ENCODE measurements at regions of chrX and their contacts with region 1.

Region 1: GRCh38 chrX:109393859-109394258 is 88.0 kb downstream of the GUCY2F start:
- DNase-seq: no peak
- ATAC-seq: no peak
- H3K4me3 ChIP-seq: no peak overlapping the region
- H3K27ac ChIP-seq: no peak overlapping the region
- H3K4me1 ChIP-seq: no peaks in the 10 kb centered on the region
- H3K27me3 ChIP-seq: no peaks in the 10 kb centered on the region

Region 2: DNA sequence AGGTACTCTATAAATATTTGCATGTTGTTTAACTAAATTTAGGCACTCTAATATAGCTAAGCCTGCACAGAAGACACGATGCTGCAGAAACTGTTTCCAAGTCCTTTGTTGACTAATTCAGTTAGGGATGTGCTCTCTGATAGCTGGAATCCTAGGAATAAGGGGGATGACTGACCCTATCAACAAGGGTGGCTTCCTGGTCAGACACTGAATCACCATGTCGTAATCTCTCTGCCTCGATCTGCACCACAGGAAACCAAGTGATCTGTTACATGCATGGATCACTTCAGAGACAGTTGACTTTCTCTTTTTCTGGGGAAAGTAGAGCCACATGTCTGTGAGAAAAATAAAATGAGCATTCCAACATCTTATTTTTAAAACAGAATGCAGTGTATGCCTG is 81.1 kb before region 1 on chrX:
- intact Hi-C with region 1: no loop called
- DNase-seq: no peak
- ATAC-seq: no peak
- H3K4me3 ChIP-seq: no peak overlapping the region
- H3K27ac ChIP-seq: no peak overlapping the region
- H3K4me1 ChIP-seq: no peaks in the 10 kb centered on the region
- H3K27me3 ChIP-seq: no peaks in the 10 kb centered on the region

Region 3: DNA sequence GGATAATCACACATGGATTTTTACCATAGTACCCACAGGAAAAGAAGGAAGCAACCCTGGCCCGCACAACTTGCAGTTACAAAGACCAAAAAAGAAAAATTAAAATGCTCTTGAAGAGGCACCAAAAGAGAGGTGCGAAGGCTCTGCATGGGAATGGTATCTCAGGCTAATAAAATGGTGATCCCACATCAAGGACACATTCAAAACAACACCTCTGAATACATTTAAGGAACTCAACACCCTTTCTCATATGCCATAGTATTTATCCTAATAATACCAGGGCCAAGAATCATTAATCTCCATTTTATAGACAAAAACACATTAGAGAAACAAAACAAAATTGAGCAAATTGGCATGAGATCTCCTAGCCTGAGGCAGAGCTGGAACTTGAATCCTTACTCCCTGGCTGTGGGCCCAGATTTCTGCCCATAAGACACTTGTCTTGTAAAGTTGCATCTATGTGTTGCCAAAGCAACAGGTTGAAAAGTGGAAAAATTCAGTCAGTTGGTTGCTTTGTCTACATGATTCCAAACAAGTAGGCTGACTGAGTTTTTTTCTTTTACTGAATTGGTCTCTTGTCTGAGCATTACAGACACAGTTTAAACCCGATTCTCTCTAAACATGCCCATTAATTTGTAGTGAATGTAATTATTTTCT is 54.6 kb after region 1 on chrX:
- intact Hi-C with region 1: loop called in 1 of 2 experiments (anchors 10 kb)
- DNase-seq: no peak
- ATAC-seq: no peak
- H3K4me3 ChIP-seq: no peak overlapping the region
- H3K27ac ChIP-seq: no peak overlapping the region
- H3K4me1 ChIP-seq: no peaks in the 10 kb centered on the region
- H3K27me3 ChIP-seq: no peaks in the 10 kb centered on the region

Region 4: GRCh38 chrX:109501176-109501575 is 107.3 kb after region 1 on chrX:
- intact Hi-C with region 1: no loop called
- DNase-seq: no peak
- ATAC-seq: no peak
- H3K4me3 ChIP-seq: no peak overlapping the region
- H3K27ac ChIP-seq: no peak overlapping the region
- H3K4me1 ChIP-seq: no peaks in the 10 kb centered on the region
- H3K27me3 ChIP-seq: no peaks in the 10 kb centered on the region

Measured in aorta (tissue), 5 donors.